Panc1 (cell line): ENCODE measurements at regions of chr2 and their contacts with region 1.

Region 1: DNA sequence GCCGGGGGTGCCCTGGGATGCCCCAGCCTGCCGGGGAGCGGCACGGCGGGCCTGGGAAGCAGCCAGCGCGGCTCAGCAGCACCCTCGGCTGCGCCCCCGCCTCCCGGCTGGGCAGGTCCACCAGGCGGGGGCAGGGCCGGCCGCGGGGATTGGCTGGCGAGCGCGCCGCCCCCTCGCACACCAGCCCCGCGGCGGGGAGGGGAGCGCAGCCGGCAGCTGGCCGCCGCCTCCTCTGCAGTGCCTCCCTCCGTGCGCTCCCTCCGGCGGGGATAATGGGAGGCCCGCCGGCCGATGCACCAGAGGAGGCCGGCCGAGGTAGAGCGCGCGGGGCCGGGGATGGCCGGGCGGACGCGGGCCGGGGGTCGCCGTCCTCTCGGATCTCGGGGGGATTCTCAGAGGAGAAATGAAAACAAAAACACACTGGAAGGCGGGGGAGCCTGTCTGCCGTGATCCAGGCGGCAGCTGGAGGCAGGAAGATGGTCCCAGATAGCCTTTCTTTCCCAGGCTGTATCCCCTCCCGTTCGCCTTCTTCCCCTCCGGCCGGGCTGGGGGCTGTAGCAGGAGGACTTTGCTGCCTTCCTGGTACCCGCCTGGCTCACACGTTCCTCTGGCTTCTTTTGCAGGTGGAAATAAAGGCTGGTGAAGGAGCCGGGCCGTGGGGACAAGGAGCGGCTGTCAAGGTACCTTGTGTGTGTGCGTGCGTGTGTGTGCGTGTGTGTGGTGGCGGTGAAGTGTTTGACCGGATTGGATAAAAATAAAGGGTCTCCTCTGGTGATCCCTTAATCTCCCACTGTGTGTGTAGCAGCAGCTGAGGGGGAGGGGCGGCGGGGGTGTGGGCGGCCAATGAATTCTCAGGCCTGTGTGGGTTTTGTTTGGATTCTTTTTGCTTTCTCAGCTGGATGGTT is 18.0 kb downstream of the TET3 start:
- DNase-seq: no peak
- ATAC-seq: peak; percentile 98
- H3K4me3 ChIP-seq: peak overlapping the region; percentile 48 to 72
- H3K27ac ChIP-seq: peak overlapping the region; percentile 58; the same call in 1 of the 2 replicates
- H3K4me1 ChIP-seq: peaks cover 27% of the 10 kb centered on the region
- H3K27me3 ChIP-seq: no peaks in the 10 kb centered on the region
- CTCF ChIP-seq: no peak; the same call in 1 of the 2 replicates

Region 2: DNA sequence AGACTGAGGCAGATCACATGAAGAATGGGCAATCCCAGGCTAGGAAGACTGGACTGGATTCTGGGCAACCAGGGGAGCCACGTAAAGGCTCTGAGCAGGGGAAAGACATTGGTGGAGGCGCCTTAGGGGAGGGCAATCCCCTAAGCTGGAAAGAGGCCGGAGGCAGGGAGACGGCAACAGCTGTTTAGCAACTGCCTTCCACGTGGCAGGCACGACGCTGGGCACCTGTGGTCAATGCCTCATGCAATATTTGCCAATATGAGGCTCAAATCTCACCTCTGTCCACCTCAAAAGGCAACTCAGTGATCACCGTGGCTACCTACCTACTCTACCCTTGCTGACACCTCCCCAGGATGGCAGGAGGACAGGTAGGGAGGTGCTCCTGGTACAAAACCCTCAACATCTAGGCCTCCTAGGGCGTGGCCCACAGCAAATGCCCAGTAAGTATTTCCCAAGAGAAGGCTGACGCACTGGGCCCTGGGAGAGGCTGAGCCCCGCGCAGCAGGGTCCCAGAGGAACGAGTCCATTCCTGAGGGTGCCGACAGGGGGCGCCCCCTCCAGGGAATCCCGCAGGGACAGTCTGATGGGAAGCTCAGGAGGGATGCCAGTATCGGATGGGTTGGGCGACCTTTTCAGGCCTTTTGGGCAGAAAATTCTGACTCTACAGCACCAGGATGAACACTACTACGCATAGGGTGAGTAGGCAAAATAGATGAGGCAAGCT is 136.0 kb after region 1 on chr2:
- CTCF ChIA-PET with region 1: no interaction called
- POLR2A ChIA-PET with region 1: no interaction called
- in situ Hi-C with region 1: no loop called
- intact Hi-C with region 1: loop called (anchors 10 kb)
- DNase-seq: no peak
- ATAC-seq: 0 out of 2 replicates have a peak, but pooled peaks have one; percentile 22
- H3K4me3 ChIP-seq: no peak overlapping the region
- H3K27ac ChIP-seq: no peak overlapping the region
- H3K4me1 ChIP-seq: no peaks in the 10 kb centered on the region
- H3K27me3 ChIP-seq: no peaks in the 10 kb centered on the region
- CTCF ChIP-seq: peak; percentile 74